ENCODE measurements at regions of chr12 and their contacts with region 1.

Region 1: GRCh38 chr12:1634590-1635191 is 5.7 kb downstream of the WNT5B start:
- DNase-seq: peak; percentile 72
- ATAC-seq: peak; percentile 68
- H3K4me3 Mint-ChIP-seq: no peak overlapping the region
- H3K27ac Mint-ChIP-seq: no peak overlapping the region
- H3K4me1 Mint-ChIP-seq: peaks cover 8% of the 10 kb centered on the region
- H3K27me3 Mint-ChIP-seq: peaks cover 52% of the 10 kb centered on the region

Region 2: DNA sequence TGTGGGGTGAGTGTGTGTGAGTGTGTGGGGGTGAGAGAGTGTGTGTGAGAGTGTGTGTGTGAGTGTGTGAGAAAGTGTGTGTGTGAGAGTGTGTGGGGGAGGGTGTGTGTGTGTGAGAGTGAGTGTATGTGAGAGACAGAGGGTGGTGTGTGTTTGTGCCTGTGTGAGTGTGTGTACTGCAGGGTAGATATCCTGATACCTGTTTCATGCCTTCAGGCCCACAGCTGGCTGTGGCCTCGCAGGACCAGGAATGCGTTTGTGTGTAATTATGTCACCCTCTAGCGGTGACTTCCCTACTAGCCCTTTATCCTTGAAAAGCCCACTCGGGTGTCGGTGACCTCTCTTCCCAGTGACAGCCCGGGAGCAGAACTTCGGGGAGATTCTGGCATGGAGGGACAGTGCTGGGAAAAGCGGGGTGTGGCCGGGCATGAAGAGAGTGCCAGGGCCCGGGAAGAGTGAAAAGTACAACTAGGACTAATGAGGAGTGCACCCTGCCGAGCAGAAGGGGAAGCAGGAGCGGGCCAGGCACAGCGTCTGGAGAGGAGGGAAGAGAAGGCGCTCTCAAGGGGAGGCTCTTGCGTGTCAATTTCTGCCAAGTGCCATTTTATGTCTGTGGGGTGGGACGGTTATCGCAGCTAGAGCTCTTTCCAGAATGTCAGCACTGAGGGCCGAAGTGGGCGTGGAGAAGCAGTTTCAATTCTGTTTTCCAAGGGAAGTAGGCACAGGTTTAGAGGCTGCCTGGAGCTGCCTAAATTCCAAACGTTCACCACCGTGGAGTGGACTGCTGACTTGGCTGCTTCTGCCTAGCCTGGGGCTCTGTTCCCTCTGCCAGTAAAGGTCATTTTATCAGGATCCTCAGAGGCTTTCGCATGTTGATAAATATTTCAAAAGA is 29.3 kb before region 1 on chr12:
- CTCF ChIA-PET with region 1: interaction called, 10 read pairs
- POLR2A ChIA-PET with region 1: no interaction called
- DNase-seq: peak; percentile 74
- ATAC-seq: peak; percentile 76
- H3K4me3 Mint-ChIP-seq: peak overlapping the region; percentile 72
- H3K27ac Mint-ChIP-seq: peak overlapping the region; percentile 29
- H3K4me1 Mint-ChIP-seq: peaks cover 45% of the 10 kb centered on the region
- H3K27me3 Mint-ChIP-seq: peaks cover 8% of the 10 kb centered on the region

Region 3: DNA sequence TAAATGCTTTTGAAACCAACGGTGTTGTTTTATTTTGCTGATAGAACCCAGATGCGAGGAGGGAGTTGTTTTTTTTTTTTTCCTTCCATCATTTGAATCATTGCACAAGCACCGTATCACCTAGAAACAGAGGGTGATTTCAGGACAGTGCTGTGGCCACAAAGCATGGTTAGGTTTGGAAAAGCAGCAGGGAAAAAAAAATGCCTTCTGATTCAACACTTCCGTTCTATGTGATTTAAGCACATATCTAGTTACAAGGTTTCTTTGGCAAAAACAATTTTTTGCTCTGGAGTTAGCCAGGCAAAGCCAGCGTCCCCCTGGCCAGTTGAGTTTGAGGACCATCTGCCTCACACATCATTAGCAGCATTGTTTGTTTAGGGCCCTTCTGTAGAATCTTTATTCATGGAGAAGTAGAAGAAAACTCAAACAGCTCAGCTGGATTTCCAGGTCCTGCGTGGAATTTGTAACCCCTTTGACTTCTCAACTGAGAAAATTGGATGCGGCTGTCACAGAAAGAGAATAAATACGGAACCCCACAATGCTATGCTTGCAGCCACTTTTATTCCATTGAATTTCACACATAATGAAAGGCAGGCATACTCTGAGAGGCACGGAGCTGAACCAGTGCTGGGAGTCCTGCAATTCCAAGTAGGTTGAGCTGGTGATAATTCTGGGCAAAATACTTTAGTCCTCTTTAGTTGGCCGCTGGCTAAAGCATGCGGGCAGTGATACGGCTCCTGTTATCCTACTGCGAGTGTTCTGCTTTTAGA is 22.7 kb before region 1 on chr12:
- CTCF ChIA-PET with region 1: interaction called, 23 read pairs
- POLR2A ChIA-PET with region 1: no interaction called
- DNase-seq: no peak
- ATAC-seq: no peak
- H3K4me3 Mint-ChIP-seq: no peak overlapping the region
- H3K27ac Mint-ChIP-seq: no peak overlapping the region
- H3K4me1 Mint-ChIP-seq: peaks cover 18% of the 10 kb centered on the region
- H3K27me3 Mint-ChIP-seq: peaks cover 27% of the 10 kb centered on the region

Region 4: DNA sequence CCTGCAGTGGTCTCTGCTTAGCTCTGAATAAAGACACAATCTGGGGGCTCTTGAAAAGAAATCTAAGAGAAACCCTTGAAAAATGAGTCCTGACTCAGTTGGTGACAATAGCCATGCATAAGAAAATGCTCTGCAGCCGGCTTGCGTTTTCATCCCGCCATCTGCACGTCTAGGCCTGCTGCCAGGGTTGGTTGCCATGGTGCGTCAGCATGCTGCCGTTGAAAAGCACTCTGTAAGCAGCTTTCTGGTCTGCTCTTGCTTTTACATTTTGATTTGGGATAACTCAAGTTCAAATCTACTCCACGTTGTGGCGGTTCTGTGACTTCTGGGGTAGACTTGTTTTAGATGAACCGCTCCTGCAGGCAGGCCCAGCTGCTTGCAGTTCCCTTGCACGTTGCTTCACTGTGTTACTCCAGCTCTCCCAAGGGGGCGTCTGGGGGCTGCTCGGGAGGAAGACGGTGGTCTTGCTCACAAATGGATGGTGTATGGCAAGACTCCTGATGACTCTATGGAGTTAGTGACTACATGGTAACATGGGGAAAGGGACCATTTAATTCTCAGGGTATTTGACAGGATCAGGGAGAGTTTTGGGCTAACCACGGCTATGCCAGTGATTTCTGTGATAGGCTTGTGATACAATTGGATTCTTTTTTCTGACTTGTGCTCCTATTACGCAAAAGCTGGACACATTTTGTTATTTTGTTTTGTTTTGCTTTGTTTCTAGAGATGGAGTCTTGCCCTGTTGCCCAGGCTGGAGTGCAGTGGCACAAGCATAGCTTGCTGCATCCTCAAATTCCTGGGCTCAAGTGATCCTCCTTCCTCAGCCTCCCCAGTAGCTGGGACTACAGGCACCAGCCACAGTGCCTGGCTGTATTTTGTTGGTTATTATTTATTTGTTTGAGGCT is 10.1 kb after region 1 on chr12:
- CTCF ChIA-PET with region 1: interaction called, 43 read pairs
- POLR2A ChIA-PET with region 1: no interaction called
- DNase-seq: no peak
- ATAC-seq: no peak
- H3K4me3 Mint-ChIP-seq: no peak overlapping the region
- H3K27ac Mint-ChIP-seq: no peak overlapping the region
- H3K4me1 Mint-ChIP-seq: peaks cover 16% of the 10 kb centered on the region
- H3K27me3 Mint-ChIP-seq: peaks cover 18% of the 10 kb centered on the region

Region 5: GRCh38 chr12:1650260-1650977 is 15.7 kb after region 1 on chr12:
- CTCF ChIA-PET with region 1: interaction called, 54 read pairs
- POLR2A ChIA-PET with region 1: no interaction called
- DNase-seq: no peak
- ATAC-seq: no peak
- H3K4me3 Mint-ChIP-seq: no peak overlapping the region
- H3K27ac Mint-ChIP-seq: no peak overlapping the region
- H3K4me1 Mint-ChIP-seq: peaks cover 15% of the 10 kb centered on the region
- H3K27me3 Mint-ChIP-seq: peaks cover 36% of the 10 kb centered on the region

Region 6: GRCh38 chr12:1767407-1768297 is 133.0 kb after region 1 on chr12:
- CTCF ChIA-PET with region 1: interaction called, 11 read pairs
- POLR2A ChIA-PET with region 1: no interaction called
- DNase-seq: no peak
- ATAC-seq: no peak
- H3K4me3 Mint-ChIP-seq: no peak overlapping the region
- H3K27ac Mint-ChIP-seq: no peak overlapping the region
- H3K4me1 Mint-ChIP-seq: no peaks in the 10 kb centered on the region
- H3K27me3 Mint-ChIP-seq: no peaks in the 10 kb centered on the region